Activated CD4-positive, alpha-beta T cell treated with anti-CD3 and anti-CD28 coated beads, Interleukin-2, amount 10 ng/mL, durations not matched to agents 7 days and 5 days (primary cell): ENCODE measurements at regions of chr13 and their contacts with region 1.

Region 1: GRCh38 chr13:30114571-30115256 is 192.6 kb downstream of the KATNAL1 start:
- DNase-seq: peak; percentile 92
- H3K4me3 Mint-ChIP-seq: peak overlapping the region; percentile 71
- H3K27ac Mint-ChIP-seq: peak overlapping the region; percentile 68
- H3K4me1 Mint-ChIP-seq: peaks cover 48% of the 10 kb centered on the region
- H3K27me3 Mint-ChIP-seq: peaks cover 4% of the 10 kb centered on the region

Region 2: GRCh38 chr13:29850224-29850898 is 264.4 kb before region 1 on chr13 and contains the start of gene UBL3:
- CTCF ChIA-PET with region 1: interaction called, 12 read pairs
- POLR2A ChIA-PET with region 1: no interaction called
- DNase-seq: peak; percentile 95
- H3K4me3 Mint-ChIP-seq: peak within 1 kb of the TSS; percentile 83
- H3K27ac Mint-ChIP-seq: peak within 1 kb of the TSS; percentile 99
- H3K4me1 Mint-ChIP-seq: peaks cover 41% of the 10 kb centered on the region
- H3K27me3 Mint-ChIP-seq: no peaks in the 10 kb centered on the region
- total RNA-seq, gene UBL3: 14.5 to 16.1 TPM

Region 3: DNA sequence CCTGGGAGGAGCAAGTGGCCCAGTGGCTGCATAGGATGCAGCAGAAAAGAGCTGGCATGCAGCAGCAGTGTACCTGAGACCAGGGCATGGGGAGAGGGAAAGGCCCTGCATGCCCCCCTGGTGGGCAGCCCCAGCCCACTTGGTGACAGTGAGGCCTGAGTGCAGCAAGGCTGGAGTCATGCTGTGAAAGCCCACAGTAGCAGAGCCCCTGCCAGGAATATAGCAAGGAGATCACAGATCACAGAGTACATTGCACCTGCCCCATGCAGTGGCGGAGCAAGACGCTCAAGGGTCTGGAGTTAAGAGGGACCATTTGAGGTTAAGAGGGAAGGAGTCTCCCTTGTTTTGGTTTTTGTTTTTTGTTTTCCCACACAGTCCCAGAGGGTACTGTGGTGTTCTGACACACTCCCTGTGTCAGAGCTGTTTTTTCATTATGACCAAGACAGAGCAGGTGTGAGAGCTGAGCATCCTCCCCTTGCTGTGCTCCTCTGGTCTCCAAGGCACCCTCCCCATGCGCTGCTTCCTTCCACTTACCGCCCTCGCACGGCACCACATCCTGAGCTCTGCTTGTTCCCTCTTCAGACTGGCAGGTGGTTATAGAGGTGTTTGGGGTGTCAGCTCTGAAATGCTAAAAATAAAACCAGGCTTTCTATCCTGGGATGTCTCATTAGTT is 179.3 kb before region 1 on chr13:
- CTCF ChIA-PET with region 1: interaction called, 12 read pairs
- POLR2A ChIA-PET with region 1: no interaction called
- DNase-seq: peak; percentile 90
- H3K4me3 Mint-ChIP-seq: peak overlapping the region; percentile 90
- H3K27ac Mint-ChIP-seq: peak overlapping the region; percentile 98
- H3K4me1 Mint-ChIP-seq: peaks cover 74% of the 10 kb centered on the region
- H3K27me3 Mint-ChIP-seq: no peaks in the 10 kb centered on the region

Region 4: GRCh38 chr13:30033681-30034457 is 80.8 kb before region 1 on chr13:
- CTCF ChIA-PET with region 1: no interaction called
- POLR2A ChIA-PET with region 1: no interaction called
- DNase-seq: no peak
- H3K4me3 Mint-ChIP-seq: no peak overlapping the region
- H3K27ac Mint-ChIP-seq: no peak overlapping the region
- H3K4me1 Mint-ChIP-seq: no peaks in the 10 kb centered on the region
- H3K27me3 Mint-ChIP-seq: peaks cover 13% of the 10 kb centered on the region

Region 5: DNA sequence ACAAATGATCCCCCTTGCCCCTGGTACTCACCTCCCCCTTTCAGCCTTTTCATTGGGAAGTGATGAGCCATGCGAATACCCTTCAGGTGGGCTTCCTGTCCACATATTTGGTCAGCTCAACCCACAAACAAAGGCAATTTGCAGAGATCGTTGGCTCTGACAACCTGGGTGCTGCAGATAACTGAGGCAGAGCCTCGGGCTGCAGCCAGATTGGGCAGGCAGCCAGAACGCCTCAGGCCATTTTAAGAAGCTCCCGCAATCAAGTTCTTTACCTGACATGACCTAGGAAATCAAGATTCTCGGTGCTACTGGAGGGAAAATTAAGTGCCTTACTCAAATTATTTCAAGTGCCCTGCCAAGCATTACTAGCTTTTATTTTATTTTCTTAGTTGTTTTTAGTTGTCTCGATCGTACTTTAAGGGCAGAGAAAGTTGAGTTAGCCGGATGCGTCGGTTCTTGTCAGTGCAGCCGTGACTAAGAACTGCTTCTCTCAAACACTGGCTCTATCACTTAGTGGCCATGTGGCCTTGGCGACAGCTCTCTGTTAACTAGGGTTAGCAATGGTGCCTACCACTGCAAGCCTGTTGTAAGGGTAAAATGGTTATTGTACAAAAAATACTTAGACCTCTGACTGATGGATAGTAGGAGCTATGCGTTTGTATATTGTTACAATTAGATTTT is 35.4 kb before region 1 on chr13:
- CTCF ChIA-PET with region 1: no interaction called
- POLR2A ChIA-PET with region 1: no interaction called
- DNase-seq: no peak
- H3K4me3 Mint-ChIP-seq: no peak overlapping the region
- H3K27ac Mint-ChIP-seq: no peak overlapping the region
- H3K4me1 Mint-ChIP-seq: no peaks in the 10 kb centered on the region
- H3K27me3 Mint-ChIP-seq: peaks cover 8% of the 10 kb centered on the region

Region 6: GRCh38 chr13:30132623-30133553 is 18.2 kb after region 1 on chr13:
- CTCF ChIA-PET with region 1: interaction called, 97 read pairs
- POLR2A ChIA-PET with region 1: no interaction called
- DNase-seq: peak; percentile 99
- H3K4me3 Mint-ChIP-seq: no peak overlapping the region
- H3K27ac Mint-ChIP-seq: peak overlapping the region; percentile 80
- H3K4me1 Mint-ChIP-seq: peaks cover 22% of the 10 kb centered on the region
- H3K27me3 Mint-ChIP-seq: no peaks in the 10 kb centered on the region